Activated T-helper 2 cell treated with anti-CD3 and anti-CD28 coated beads, Interferon-gamma antibody, Interleukin-2, Interleukin-4, amounts not matched to agents 10 μg/mL and 5 μg/mL and 100 μg/mL, durations not matched to agents 14 hours and 24 hours and 36 hours (primary cell): ENCODE measurements at regions of chr3 and their contacts with region 1.

Region 1: DNA sequence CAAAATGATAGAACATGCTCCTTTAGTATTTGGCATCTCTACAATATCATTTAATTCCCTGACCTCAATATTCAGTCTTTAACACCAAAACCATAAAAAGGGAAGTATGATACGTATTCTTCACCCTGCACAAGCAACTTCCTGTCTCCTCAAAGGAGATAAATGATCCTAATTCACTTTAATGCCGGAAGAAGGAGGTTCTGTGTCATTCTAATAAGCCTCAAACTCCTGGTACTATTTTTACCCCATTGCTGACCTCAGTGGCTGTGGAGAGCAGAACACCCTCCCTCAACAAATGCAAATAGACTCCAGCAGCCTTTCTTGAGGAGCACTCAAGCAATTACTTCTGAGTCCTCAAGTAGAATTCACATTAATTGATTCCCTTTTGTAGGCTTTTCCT is 173.3 kb downstream of the TMEM108 start:
- DNase-seq: no peak
- H3K4me3 Mint-ChIP-seq: no peak overlapping the region
- H3K27ac Mint-ChIP-seq: no peak overlapping the region
- H3K4me1 Mint-ChIP-seq: peaks cover 20% of the 10 kb centered on the region
- H3K27me3 Mint-ChIP-seq: peaks cover 4% of the 10 kb centered on the region

Region 2: GRCh38 chr3:133268726-133269134 is 57.3 kb after region 1 on chr3:
- intact Hi-C with region 1: loop called (anchors 5 kb)
- DNase-seq: no peak
- H3K4me3 Mint-ChIP-seq: no peak overlapping the region
- H3K27ac Mint-ChIP-seq: no peak overlapping the region
- H3K4me1 Mint-ChIP-seq: peaks cover 9% of the 10 kb centered on the region
- H3K27me3 Mint-ChIP-seq: peaks cover 11% of the 10 kb centered on the region